T-cell (primary cell): ENCODE measurements at regions of chr12 and their contacts with region 1.

Region 1: DNA sequence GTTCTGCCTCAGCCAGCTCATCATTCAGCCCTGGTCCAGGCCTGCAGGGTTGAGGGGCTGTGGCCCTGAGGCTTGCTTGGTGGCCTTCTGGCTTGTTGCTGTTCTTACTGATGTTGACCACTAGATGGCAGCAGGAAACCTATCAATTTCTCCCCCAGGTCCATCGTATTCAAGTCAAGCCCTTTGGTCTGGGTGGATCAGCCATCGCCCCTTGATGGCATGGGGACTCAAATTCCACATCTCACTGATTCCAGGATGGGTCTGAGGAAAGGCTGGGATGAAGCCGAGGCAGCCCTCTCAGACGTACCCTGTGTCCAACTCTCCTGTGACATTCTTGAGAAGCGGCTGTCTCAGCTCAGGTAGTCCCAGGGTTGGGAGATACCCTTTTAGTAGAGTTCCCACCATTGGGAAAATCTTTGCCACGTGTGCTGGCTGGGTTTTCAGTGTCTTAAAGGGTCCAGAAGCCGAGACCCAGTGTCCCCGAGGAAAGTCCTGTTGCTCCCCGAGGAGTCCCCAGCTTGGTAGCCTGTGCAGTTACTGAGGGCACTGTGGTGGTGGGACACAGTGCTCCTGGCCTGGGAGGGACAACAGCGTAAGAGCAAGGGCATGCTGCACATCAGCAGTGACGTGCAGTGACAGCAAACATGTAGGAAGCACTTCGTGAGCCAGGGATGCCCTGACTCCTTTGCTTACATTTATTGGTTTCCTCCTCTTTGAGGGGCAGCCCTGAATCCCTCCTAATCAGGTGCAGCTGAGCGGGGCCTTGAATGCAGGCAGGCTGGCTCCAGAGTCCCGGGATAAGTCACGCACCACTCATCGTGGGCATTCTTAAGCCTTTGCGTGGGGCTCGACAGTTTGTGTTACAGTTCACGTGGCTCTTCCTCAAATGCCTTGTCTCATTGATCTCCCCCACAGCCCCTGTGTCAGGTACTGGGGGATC is 58.6 kb downstream of the TSPAN9 start:
- DNase-seq: peak in 22 of 35 experiments; percentile 3 to 73 (median 14)
- ATAC-seq: peak in 3 of 4 experiments; percentile 37 to 62 (median 62)
- H3K4me3 ChIP-seq: no peak overlapping the region
- H3K4me3 Mint-ChIP-seq: no peak overlapping the region
- H3K27ac ChIP-seq: no peak overlapping the region
- H3K27ac Mint-ChIP-seq: no peak overlapping the region
- H3K4me1 ChIP-seq: peaks cover 0 to 2% of the 10 kb centered on the region in 2 experiments
- H3K4me1 Mint-ChIP-seq: peaks cover 3 to 4% (median 4%) of the 10 kb centered on the region in 3 donors
- H3K27me3 ChIP-seq: peaks cover 9 to 63% of the 10 kb centered on the region in 2 experiments
- H3K27me3 Mint-ChIP-seq: peaks cover 48 to 52% of the 10 kb centered on the region in 2 donors

Region 2: DNA sequence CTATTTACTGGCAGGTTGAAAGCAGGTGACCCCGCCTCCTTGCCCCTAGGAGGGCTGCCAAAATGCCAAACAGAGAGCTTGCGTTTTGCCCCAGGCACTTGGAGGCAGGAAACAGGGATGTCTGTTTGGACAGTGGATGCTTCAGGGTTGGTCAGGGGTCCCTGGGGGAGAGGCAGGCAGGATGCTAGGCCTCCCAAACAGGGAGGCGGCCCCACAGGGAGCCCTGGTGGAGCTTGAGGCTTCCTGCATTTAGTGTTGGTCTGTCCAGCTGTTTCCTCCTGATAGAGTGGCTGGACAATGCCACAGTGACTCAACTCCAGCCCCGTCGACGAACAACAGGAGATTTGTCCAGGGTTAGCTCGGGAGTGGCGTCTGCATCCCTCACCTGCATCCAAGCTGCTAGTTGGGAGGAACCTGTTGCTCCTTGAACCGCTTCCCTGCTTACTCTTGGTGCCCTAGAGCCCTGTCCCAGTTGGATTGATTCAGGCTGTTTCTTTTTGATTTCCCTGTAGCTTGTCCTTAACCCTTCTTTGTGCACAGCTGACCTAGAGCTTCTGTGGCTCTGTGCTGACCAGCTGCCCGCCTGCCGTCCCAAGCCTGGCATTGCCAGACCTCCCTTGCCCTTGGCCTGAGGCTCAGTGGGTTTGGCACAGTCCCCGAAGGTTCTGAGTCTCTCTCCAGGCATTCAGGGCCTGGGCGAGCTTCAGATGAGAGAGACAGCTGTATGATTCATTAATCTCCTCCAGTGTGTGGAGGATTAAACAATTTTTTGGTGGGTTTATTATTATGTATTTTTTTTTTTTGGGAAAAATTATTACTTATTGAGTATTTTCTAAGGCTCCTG is 12.7 kb before region 1 on chr12:
- CTCF ChIA-PET with region 1: interaction called in 1 of 2 experiments, 10 read pairs
- POLR2A ChIA-PET with region 1: no interaction called
- DNase-seq: no peak
- ATAC-seq: no peak
- H3K4me3 ChIP-seq: no peak overlapping the region
- H3K4me3 Mint-ChIP-seq: no peak overlapping the region
- H3K27ac ChIP-seq: no peak overlapping the region
- H3K27ac Mint-ChIP-seq: no peak overlapping the region
- H3K4me1 ChIP-seq: peaks cover 0 to 10% of the 10 kb centered on the region in 2 experiments
- H3K4me1 Mint-ChIP-seq: peaks cover 14 to 17% (median 15%) of the 10 kb centered on the region in 3 donors
- H3K27me3 ChIP-seq: peaks cover 11 to 28% of the 10 kb centered on the region in 2 experiments
- H3K27me3 Mint-ChIP-seq: peaks cover 17 to 19% of the 10 kb centered on the region in 2 donors